ENCODE measurements at regions of chr6 and their contacts with region 1.

Region 1: DNA sequence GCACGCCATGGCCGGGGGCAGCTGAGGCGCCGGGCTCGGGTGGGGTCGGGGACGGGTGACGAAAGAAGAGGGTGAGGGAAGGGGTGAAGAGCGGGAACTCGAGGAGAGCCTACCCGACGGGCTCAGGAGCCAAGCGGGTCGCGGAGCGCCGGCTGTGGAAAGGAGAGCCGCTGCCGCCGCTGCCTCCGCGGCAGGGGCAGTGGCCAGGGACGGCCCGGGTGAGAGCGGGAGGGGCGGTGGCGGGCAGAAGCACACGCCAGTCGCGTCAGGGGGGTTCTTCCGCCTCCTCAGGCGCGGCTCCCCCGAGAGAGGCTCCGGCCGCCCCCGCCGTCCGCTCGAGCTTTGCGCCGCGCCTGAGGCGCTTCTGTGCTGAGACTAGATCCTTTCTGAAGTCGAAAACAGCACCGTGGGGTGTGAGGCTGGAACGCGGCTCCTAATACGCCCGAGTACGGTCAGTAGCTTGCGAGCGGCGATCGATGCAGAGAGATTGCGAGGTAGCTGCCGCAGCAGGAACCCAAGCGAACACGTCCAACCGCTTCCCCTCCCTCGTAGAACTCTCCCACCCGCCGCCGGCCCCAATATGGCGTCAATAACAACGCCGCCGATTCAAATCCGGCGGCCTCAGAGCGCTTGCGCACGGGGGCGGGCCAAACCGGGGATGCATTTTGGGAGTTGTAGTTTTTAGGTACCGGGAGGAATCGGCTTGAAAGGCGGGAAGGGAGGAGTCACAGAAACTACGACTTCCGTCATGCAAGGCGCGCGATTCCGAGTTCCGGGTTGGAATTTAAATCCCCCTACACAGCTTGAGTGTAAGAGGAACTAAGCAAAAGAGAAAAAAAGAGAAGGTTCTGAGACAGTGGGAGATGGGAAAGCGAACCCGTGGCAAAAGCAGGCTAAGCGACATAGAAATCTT is at the start of gene AKIRIN2:
- DNase-seq: peak; percentile 98
- ATAC-seq: peak; percentile 85
- H3K4me3 Mint-ChIP-seq: peak within 1 kb of the TSS; percentile 96
- H3K27ac Mint-ChIP-seq: peak within 1 kb of the TSS; percentile 97
- H3K4me1 Mint-ChIP-seq: peaks cover 36% of the 10 kb centered on the region
- H3K27me3 Mint-ChIP-seq: no peaks in the 10 kb centered on the region
- total RNA-seq, gene AKIRIN2: 42.1 to 45.2 TPM

Region 2: GRCh38 chr6:87589693-87590549 is 112.0 kb before region 1 on chr6 and contains the starts of genes ORC3 and RARS2:
- CTCF ChIA-PET with region 1: interaction called, 4 read pairs
- POLR2A ChIA-PET with region 1: interaction called, 17 read pairs
- DNase-seq: peak; percentile 95
- ATAC-seq: peak; percentile 99
- H3K4me3 Mint-ChIP-seq: peak within 1 kb of the TSS; percentile 83
- H3K27ac Mint-ChIP-seq: peak within 1 kb of the TSS; percentile 85
- H3K4me1 Mint-ChIP-seq: peaks cover 41% of the 10 kb centered on the region
- H3K27me3 Mint-ChIP-seq: no peaks in the 10 kb centered on the region
- total RNA-seq, gene ORC3: 27.1 TPM
- total RNA-seq, gene RARS2: 20.6 to 21.4 TPM

Region 3: DNA sequence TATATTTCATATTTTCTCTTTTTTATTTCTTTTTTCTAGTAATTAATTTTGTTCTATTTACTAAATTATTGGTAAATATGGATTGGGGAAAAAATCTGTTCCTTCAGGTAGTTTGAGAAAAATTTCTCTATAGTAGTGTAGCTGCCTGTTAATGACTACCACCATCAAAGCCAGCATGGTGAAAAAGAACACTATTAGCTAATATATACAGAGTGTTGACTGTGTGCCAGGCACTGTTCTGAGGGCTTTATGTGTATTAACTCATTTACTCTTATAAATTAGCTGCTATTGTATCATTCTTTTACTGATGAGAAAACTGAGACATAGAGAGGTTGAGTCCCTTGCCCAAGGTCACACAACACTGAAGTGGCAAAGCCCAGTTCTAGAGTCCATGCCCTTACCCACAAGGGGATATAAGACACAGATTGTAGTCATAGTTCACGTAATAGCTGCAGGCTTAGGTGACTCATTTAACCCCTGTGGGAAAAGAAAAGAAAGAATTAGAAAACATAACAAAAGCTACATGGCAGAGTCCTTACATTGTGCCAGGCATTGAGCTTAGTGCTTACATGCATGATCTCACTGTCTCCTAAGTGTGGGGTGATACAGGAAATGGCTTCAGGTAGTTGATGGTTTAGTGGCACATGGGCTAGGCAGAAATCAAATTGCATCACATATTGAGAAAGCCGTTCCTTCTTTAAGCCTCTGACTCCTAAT is 12.3 kb after region 1 on chr6:
- CTCF ChIA-PET with region 1: interaction called, 4 read pairs
- POLR2A ChIA-PET with region 1: interaction called, 10 read pairs
- DNase-seq: peak; percentile 37
- ATAC-seq: peak; percentile 71
- H3K4me3 Mint-ChIP-seq: no peak overlapping the region
- H3K27ac Mint-ChIP-seq: peak overlapping the region; percentile 59
- H3K4me1 Mint-ChIP-seq: peaks cover 29% of the 10 kb centered on the region
- H3K27me3 Mint-ChIP-seq: no peaks in the 10 kb centered on the region

Region 4: DNA sequence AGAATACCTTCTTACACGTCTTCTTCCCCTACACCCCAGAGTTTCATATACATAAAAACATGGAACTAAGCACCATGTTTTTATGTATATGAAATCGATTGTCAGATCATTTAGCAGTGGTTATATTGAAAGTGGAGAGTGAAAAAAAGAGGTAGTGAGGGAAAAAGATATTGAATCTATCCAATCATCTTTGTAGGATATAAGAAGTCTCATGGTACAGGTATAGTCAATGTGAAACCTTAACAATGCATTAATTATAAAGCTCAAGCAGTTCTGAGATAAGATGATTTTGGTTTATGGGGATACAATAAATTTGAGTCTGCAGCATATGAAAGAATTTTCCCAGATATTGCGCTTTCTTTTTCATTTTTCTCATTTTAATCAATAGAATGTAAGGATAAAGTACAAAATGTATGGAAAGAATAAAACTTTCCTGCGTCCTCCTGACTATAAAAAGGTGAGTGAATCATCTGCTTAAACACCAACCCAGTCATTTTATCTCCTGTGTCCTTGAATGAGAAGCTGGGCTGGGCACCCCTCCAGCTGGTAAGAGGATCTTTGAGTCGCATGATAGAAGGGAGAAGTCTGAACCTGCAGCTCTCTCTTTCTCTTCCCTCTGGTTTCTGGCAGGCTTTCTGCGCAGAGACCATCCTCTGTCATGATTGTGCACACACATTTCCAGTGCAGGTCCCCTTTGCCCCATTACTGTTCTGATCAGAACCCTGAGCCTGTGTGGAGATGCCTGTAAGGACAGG is 28.2 kb after region 1 on chr6:
- CTCF ChIA-PET with region 1: interaction called, 4 read pairs
- POLR2A ChIA-PET with region 1: interaction called, 11 read pairs
- DNase-seq: no peak
- ATAC-seq: no peak
- H3K4me3 Mint-ChIP-seq: no peak overlapping the region
- H3K27ac Mint-ChIP-seq: no peak overlapping the region
- H3K4me1 Mint-ChIP-seq: peaks cover 17% of the 10 kb centered on the region
- H3K27me3 Mint-ChIP-seq: peaks cover 8% of the 10 kb centered on the region

Region 5: DNA sequence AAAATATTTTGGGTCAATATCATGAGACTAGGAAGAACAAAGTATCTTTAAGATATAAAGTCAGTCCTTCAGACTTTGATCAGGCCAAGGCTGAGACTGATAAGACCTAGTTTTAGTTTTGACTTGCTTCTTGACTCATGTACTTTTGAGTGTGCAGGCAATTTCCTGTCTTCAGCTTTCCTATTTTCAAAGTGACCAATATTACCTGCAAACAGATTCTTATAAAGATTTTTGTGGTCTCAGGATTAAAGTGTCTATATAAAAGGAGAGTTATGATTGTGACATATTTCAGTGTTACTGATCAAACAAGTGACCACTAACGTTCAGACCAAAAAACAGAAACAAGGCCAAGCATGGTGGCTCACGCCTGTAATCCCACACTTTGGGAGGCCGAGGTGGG is 36.1 kb after region 1 on chr6:
- CTCF ChIA-PET with region 1: no interaction called
- POLR2A ChIA-PET with region 1: interaction called, 11 read pairs
- DNase-seq: no peak
- ATAC-seq: peak; percentile 46
- H3K4me3 Mint-ChIP-seq: no peak overlapping the region
- H3K27ac Mint-ChIP-seq: no peak overlapping the region
- H3K4me1 Mint-ChIP-seq: peaks cover 31% of the 10 kb centered on the region
- H3K27me3 Mint-ChIP-seq: no peaks in the 10 kb centered on the region

Region 6: GRCh38 chr6:87951751-87952150 is 249.8 kb after region 1 on chr6:
- CTCF ChIA-PET with region 1: no interaction called
- POLR2A ChIA-PET with region 1: no interaction called
- DNase-seq: no peak
- ATAC-seq: no peak
- H3K4me3 Mint-ChIP-seq: no peak overlapping the region
- H3K27ac Mint-ChIP-seq: no peak overlapping the region
- H3K4me1 Mint-ChIP-seq: no peaks in the 10 kb centered on the region
- H3K27me3 Mint-ChIP-seq: peaks cover 7% of the 10 kb centered on the region